ENCODE measurements at regions of chr6 and their contacts with region 1.

Region 1: DNA sequence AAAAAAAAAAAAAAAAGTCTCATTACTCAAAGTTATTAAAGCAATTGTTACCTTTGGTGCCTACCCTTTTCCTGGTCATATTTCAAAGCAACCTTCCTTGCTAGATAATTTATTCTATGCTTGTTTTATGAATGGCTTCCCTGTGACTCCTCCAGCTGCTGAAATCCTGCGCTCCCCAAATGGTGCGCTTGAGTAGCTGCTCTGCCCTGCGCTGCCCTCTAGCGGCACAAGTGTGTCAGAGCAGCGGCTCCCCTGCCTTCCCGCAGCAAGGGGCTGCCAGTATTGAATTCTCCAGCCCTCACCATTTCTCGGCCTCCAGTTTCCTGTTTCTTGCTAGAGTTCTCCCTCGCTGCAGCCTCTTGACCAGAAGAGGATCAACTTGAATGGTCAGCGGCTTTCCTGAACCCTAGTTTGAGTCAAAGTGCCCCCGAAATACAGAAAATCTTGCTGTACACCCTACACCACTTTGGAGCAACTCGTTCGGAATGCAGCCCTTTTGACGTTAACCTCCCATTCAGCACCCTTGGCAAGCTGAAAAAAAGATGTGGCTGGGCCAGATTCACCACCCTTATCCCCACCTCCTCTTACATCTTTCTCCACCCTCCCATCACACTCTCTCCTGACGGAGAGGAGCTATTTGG is 60.4 kb upstream of the KLHL31 start:
- DNase-seq: peak; percentile 82
- ATAC-seq: peak; percentile 95

Region 2: DNA sequence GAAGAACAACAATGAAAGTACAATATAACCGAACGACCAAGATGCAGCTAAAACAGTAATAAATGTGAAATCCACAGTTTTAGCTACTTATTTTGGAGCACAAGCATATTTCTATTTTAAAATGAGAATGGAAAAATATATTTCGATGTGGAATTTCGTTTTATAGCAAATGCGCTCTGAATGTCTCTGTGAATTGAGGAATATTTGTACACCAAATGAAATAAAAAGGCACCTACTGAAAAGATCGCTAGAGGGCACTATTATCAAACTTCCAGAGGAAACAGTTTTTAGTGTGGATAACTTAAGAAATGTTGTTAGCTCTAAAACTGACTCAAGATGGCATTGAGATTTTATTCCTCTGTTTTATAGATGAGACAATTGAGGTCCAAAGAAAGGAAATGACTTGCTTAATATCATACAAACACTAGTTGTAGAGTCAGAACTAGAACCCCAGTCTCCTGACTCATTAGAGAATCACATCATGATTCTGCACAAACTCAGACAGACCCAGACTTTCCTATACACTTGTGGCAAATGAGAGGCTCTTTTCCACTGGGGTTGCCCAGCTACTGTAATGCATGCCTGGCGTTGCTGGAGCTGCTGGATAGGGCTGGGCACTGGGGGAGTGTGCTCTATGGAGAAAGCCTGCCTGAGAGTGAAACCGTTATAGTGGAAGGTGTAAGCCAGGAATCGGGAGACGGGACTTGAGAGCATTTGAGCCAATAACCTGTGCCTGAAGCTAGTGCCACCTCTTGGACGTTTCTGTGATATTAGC is 232.9 kb before region 1 on chr6:
- intact Hi-C with region 1: loop called (anchors 5 kb)
- DNase-seq: no peak
- ATAC-seq: peak; percentile 82

Measured in Right ventricle myocardium superior (tissue), 1 donor.